ENCODE measurements at regions of chr22 and their contacts with region 1.

Region 1: DNA sequence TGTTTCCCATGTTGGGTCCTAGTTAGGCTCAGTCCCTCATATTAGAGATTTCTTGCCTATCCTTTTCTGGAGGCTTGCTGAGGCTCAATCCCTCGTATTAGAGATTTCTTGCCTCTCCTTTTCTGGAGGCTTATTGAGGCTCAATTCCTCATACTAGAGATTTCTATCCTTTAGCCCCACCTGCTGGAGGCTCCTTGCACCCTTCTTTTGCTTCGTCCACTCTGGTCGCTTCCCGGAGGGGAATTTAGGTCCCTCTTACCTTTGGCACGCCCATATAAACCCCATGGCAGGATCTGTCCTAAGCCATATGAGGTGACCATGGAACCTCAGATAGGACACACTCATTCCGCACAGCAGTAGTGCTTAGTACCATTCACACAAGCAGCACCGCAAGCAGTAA is 15.9 kb downstream of the CYP2D6 start:
- DNase-seq: no peak
- ATAC-seq: peak in 1 of 2 donors; percentile 30

Region 2: DNA sequence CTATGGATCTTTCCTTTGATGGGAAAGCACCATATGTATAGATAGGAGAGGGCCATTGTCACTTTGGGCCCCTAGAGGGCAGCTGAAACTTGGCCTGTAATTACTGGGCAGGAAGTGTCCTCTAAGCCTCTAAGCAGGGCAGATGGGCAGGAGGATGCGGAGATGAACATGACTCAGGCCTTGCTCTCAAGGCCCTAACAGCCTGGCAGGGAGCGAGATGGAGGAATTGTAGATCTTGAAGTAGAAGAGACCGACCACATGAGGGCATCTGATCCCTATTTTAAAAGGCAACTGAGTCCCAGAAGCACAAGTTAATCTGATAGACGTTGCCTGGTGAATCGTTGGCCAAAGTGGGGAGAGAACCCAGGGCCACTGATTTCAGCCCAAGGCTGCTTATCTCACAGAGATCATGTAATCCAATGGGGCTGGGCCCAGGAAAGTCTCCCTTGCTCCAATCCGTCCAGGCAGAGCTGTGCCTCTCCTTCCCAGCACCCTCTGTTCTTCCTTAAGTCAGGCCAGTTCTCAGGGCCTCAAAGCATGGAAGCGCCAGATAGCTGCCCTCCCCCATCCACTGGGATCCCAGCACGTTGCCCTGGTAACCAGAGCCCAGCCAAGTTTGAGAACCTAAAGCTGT is 148.0 kb before region 1 on chr22:
- intact Hi-C with region 1: loop called (anchors 5 to 10 kb)
- DNase-seq: no peak
- ATAC-seq: peak; percentile 42 to 57

Region 3: GRCh38 chr22:42261296-42261695 is 146.6 kb after region 1 on chr22:
- intact Hi-C with region 1: no loop called
- DNase-seq: no peak
- ATAC-seq: no peak

Region 4: GRCh38 chr22:42277988-42278776 is 163.5 kb after region 1 on chr22:
- intact Hi-C with region 1: no loop called
- DNase-seq: no peak
- ATAC-seq: no peak

Measured in left cardiac atrium (tissue), 4 donors.